ENCODE measurements at regions of chr11 and their contacts with region 1.

Region 1: DNA sequence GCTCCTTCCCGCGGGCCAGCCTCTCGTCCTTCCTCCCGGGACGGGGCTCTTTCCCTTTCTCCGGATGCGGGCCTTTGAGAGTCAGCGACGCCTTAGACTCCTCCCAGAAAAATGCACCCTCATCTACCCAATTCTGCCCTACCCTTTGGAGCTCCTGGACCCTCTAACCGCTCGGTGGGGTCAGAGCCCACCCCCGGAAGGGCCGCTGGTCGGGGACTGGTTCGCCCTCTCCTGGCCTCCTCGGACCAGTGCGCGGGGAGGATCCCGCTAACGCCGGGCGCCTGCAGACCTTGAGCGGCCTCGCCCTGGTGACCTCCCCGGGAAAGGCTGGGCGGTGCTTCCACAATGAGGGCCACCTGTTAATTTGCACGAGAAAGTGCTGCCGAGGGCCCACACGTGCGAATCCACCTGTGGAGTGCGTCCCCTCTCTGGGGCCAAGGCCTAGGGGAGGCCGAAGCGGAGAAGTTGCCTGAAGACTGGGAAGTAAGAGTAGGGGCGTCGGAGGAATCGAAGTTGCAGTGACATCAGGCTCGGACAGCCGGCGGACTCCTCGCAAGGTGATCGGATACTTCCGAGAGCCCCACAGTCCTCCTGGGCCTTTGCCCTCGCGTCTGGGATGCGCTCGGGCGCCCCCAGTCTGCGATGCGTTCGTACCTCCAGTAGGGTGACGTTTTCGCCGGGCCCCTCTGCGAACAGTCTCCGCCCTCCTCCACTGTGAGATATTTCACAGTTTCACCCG is 61.5 kb downstream of the ENDOD1 start:
- DNase-seq: peak; percentile 93
- H3K4me3 Mint-ChIP-seq: peak overlapping the region; percentile 85
- H3K27ac Mint-ChIP-seq: peak overlapping the region; percentile 86
- H3K4me1 Mint-ChIP-seq: peaks cover 45% of the 10 kb centered on the region
- H3K27me3 Mint-ChIP-seq: peaks cover 4% of the 10 kb centered on the region

Region 2: DNA sequence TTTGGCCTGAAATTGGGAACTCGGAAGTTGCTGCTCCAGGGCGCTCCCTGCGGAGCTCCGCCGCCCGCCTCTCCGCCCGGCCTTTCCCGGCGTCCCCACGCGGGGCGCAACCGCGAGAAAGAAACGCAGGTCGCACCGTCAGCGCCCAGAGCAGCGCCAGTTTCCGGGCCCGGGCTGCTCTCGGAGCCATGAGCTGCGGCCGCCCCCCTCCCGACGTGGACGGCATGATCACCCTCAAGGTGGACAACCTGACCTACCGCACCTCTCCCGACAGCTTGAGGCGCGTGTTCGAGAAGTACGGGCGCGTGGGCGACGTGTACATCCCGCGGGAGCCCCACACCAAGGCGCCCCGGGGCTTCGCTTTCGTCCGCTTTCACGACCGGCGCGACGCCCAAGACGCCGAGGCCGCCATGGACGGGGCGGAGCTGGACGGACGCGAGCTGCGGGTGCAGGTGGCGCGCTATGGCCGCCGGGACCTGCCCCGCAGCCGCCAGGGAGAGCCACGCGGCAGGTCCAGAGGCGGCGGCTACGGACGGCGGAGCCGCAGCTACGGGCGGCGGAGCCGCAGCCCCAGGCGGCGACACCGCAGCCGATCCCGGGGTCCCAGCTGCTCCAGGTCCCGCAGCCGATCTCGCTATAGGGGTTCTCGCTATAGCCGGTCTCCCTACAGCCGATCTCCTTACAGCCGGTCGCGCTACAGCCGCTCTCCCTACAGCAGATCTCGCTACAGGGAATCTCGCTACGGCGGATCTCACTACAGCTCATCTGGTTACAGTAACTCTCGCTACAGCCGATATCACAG is 83.9 kb before region 1 on chr11:
- CTCF ChIA-PET with region 1: interaction called, 89 read pairs
- POLR2A ChIA-PET with region 1: interaction called, 88 read pairs
- DNase-seq: peak; percentile 76
- H3K4me3 Mint-ChIP-seq: peak overlapping the region; percentile 92
- H3K27ac Mint-ChIP-seq: peak overlapping the region; percentile 94
- H3K4me1 Mint-ChIP-seq: peaks cover 25% of the 10 kb centered on the region
- H3K27me3 Mint-ChIP-seq: peaks cover under 1% of the 10 kb centered on the region

Region 3: DNA sequence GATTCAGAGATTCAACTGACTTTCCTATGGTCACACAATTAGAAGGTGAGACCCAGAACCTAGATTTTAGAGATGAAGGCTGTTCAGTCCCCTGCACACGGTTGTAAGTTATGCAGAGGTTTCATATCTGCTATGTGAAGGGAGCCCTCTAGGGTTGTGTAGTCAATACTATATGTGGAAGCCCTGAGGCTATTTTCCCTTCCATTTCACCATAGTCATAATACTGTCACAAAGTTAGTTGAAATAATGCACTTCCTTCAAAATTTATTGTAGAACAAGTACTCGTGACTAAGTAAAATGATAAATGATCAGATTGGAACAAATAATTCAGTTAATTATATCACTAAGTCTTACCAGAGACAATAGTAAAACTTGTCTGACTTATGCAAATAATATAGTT is 12.7 kb before region 1 on chr11:
- CTCF ChIA-PET with region 1: interaction called, 12 read pairs
- POLR2A ChIA-PET with region 1: interaction called, 4 read pairs
- DNase-seq: no peak
- H3K4me3 Mint-ChIP-seq: no peak overlapping the region
- H3K27ac Mint-ChIP-seq: no peak overlapping the region
- H3K4me1 Mint-ChIP-seq: peaks cover 9% of the 10 kb centered on the region
- H3K27me3 Mint-ChIP-seq: peaks cover 11% of the 10 kb centered on the region

Region 4: DNA sequence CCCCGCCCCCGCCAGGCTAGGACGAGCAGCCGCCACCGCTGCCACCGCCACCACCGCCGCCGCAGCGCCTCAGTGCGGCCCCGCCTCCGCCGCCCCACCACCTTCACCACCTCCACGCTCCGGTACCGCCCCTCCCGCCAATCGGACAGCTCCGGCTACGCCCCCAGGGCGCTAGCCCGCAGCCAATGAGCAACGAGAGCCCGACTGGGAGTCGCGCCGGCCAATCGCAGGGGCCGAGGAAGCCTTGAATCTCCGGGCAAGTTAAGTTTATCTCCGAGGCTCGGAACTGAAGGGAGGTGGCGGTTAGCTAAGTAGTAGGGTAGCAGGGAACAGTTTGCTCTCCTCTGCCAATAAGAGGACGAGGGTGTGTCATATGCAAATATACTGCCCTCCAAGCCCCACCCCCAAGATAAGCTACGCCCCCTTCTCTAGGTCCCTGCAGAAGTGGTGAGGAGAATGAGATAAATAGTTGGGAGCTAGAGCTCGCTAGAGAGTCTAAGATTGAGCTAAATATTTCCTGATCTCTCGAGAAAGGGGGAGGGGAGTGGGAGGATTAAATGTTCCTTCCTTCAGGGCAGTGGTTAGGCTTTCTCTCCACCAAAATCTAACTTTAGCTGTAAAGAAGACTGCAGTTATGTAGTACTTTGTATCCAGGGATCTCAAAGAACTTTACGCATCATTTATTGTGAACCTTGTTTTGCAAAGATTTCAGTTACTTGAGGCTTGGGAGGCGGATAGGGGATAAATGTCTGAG is 80.2 kb after region 1 on chr11 and contains the start of gene SESN3:
- CTCF ChIA-PET with region 1: interaction called, 41 read pairs
- POLR2A ChIA-PET with region 1: interaction called, 73 read pairs
- DNase-seq: peak; percentile 99
- H3K4me3 Mint-ChIP-seq: no peak within 1 kb of the TSS
- H3K27ac Mint-ChIP-seq: peak within 1 kb of the TSS; percentile 79
- H3K4me1 Mint-ChIP-seq: peaks cover 36% of the 10 kb centered on the region
- H3K27me3 Mint-ChIP-seq: peaks cover 12% of the 10 kb centered on the region
- total RNA-seq, gene SESN3: 23.2 to 24.6 TPM

Region 5: GRCh38 chr11:95692526-95693260 is 541.6 kb after region 1 on chr11:
- CTCF ChIA-PET with region 1: interaction called, 10 read pairs
- POLR2A ChIA-PET with region 1: interaction called, 5 read pairs
- DNase-seq: no peak
- H3K4me3 Mint-ChIP-seq: no peak overlapping the region
- H3K27ac Mint-ChIP-seq: no peak overlapping the region
- H3K4me1 Mint-ChIP-seq: peaks cover 5% of the 10 kb centered on the region
- H3K27me3 Mint-ChIP-seq: no peaks in the 10 kb centered on the region

Region 6: DNA sequence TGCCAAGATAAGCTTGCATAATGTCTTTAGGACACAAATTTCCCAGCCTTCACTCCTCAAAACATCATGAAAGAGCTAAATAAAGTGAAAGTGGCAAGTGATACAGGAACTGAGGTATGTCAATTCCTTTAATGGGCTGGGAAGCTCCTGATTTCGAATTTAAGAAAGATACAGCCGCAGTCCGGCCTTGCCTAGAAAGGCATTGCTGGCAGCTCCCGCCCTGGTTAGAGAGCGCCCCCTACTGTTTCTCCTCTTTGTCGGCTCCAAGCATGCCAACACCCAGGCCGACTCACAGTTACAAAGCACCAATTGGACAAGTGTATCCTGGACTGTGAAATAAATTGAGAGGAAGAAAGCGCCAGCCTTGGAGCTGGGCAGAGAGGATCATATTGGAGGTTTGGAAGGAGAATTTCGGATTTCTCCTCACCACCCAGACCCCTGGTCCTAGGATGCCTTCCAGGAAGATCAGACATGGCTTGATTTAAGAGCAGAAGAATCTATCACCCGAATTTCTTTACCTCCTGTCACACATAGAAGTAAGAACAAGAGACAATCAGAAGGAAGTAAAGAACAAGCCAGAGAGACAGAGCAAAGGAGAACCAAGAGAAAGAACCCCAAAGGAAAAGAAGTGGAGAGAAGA is 554.5 kb after region 1 on chr11:
- CTCF ChIA-PET with region 1: interaction called, 293 read pairs
- POLR2A ChIA-PET with region 1: interaction called, 14 read pairs
- DNase-seq: peak; percentile 85
- H3K4me3 Mint-ChIP-seq: no peak overlapping the region
- H3K27ac Mint-ChIP-seq: no peak overlapping the region
- H3K4me1 Mint-ChIP-seq: peaks cover 11% of the 10 kb centered on the region
- H3K27me3 Mint-ChIP-seq: peaks cover 3% of the 10 kb centered on the region

Measured in activated CD4-positive, alpha-beta memory T cell treated with anti-CD3 and anti-CD28 coated beads, Interleukin-2, amount 10 ng/mL, durations not matched to agents 7 days and 5 days (primary cell).